Dendritic cell treated with granulocyte-macrophage colony-stimulating factor and Interleukin-4, amounts not matched to agents 40 ng/mL and 50 ng/mL, for 4 days (primary cell): ENCODE measurements at regions of chr4 and their contacts with region 1.

Region 1: DNA sequence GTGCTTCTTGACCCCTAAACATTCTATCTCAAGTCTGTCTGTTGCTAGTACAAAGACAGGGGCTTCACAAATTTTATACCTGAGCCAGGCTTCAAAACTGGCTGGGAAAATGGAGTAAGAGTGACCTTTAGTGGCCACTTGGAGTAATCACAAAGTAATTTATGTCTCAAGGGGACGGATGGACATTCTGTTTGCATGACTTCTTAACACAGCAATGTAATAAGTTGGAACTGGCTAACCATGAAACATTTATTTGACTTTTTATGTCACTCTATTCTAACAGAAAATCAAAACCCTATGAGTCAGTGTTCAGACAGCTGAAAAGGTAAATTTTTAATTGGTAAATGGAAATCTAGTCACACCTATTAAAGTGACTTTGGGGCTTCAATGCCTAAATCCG is 600.6 kb downstream of the ANKRD50 start:
- H3K4me3 Mint-ChIP-seq: no peak overlapping the region
- H3K27ac Mint-ChIP-seq: no peak overlapping the region
- H3K4me1 Mint-ChIP-seq: no peaks in the 10 kb centered on the region
- H3K27me3 Mint-ChIP-seq: no peaks in the 10 kb centered on the region

Region 2: GRCh38 chr4:123396307-123397143 is 715.4 kb before region 1 on chr4 and contains the start of gene SPRY1:
- intact Hi-C with region 1: loop called (anchors 10 kb)
- H3K4me3 Mint-ChIP-seq: peak within 1 kb of the TSS; percentile 73
- H3K27ac Mint-ChIP-seq: peak within 1 kb of the TSS; percentile 57
- H3K4me1 Mint-ChIP-seq: peaks cover 23% of the 10 kb centered on the region
- H3K27me3 Mint-ChIP-seq: peaks cover 41% of the 10 kb centered on the region

Region 3: DNA sequence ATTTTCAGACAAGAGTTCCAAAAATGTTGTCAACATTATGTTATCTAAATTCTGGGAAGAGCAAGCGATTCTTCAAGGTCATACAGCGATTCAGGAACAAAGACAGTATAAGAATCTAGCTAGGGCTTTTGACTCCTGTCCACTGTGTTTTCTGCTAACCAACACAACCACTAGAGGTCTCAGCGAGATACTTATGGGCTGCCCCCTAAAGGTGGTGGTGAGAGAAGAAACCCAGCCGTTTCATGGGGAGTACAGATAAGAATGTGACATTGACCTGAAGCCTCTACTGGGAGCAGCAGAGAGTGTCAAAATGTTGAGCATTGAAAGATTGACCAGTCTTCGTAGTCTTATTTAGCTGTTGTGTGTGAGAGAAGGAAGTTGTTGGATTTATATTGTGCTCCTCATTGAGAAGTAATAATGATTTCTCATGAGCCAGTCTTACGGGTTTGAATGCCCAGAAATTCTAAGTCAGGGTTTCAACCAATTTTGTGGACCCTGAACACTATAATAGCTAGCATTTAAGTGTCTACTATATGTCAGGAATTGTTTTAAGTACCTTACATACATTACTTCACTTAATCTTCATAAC is 547.1 kb before region 1 on chr4:
- intact Hi-C with region 1: loop called (anchors 10 kb)
- H3K4me3 Mint-ChIP-seq: no peak overlapping the region
- H3K27ac Mint-ChIP-seq: no peak overlapping the region
- H3K4me1 Mint-ChIP-seq: peaks cover 5% of the 10 kb centered on the region
- H3K27me3 Mint-ChIP-seq: no peaks in the 10 kb centered on the region

Region 4: GRCh38 chr4:123776254-123776653 is 335.7 kb before region 1 on chr4:
- intact Hi-C with region 1: loop called (anchors 1 kb)
- H3K4me3 Mint-ChIP-seq: no peak overlapping the region
- H3K27ac Mint-ChIP-seq: peak overlapping the region; percentile 1
- H3K4me1 Mint-ChIP-seq: peaks cover 14% of the 10 kb centered on the region
- H3K27me3 Mint-ChIP-seq: no peaks in the 10 kb centered on the region